Naive thymus-derived CD4-positive, alpha-beta T cell (primary cell): ENCODE measurements at regions of chr4 and their contacts with region 1.

Region 1: GRCh38 chr4:85968945-85969819 is 390.7 kb downstream of the MAPK10 start:
- DNase-seq: peak in 2 of 9 donors; percentile 1 to 7
- ATAC-seq: no peak
- H3K4me3 ChIP-seq: no peak overlapping the region
- H3K4me3 Mint-ChIP-seq: no peak overlapping the region
- H3K27ac ChIP-seq: no peak overlapping the region
- H3K27ac Mint-ChIP-seq: no peak overlapping the region
- H3K4me1 ChIP-seq: no peaks in the 10 kb centered on the region
- H3K4me1 Mint-ChIP-seq: no peaks in the 10 kb centered on the region
- H3K27me3 ChIP-seq: no peaks in the 10 kb centered on the region
- H3K27me3 Mint-ChIP-seq: no peaks in the 10 kb centered on the region

Region 2: GRCh38 chr4:85942107-85942506 is 27.1 kb before region 1 on chr4:
- CTCF ChIA-PET with region 1: no interaction called
- POLR2A ChIA-PET with region 1: no interaction called
- intact Hi-C with region 1: loop called in 1 of 2 experiments (anchors 1 kb)
- DNase-seq: no peak
- ATAC-seq: no peak
- H3K4me3 ChIP-seq: no peak overlapping the region
- H3K4me3 Mint-ChIP-seq: no peak overlapping the region
- H3K27ac ChIP-seq: no peak overlapping the region
- H3K27ac Mint-ChIP-seq: no peak overlapping the region
- H3K4me1 ChIP-seq: no peaks in the 10 kb centered on the region
- H3K4me1 Mint-ChIP-seq: no peaks in the 10 kb centered on the region
- H3K27me3 ChIP-seq: no peaks in the 10 kb centered on the region
- H3K27me3 Mint-ChIP-seq: no peaks in the 10 kb centered on the region

Region 3: GRCh38 chr4:85953651-85954018 is 15.5 kb before region 1 on chr4:
- CTCF ChIA-PET with region 1: no interaction called
- POLR2A ChIA-PET with region 1: no interaction called
- intact Hi-C with region 1: no loop called
- DNase-seq: no peak
- ATAC-seq: no peak
- H3K4me3 ChIP-seq: no peak overlapping the region
- H3K4me3 Mint-ChIP-seq: no peak overlapping the region
- H3K27ac ChIP-seq: no peak overlapping the region
- H3K27ac Mint-ChIP-seq: no peak overlapping the region
- H3K4me1 ChIP-seq: no peaks in the 10 kb centered on the region
- H3K4me1 Mint-ChIP-seq: peaks cover 0 to 1% (median 0%) of the 10 kb centered on the region in 7 donors
- H3K27me3 ChIP-seq: no peaks in the 10 kb centered on the region
- H3K27me3 Mint-ChIP-seq: peaks cover 0 to 3% (median 0%) of the 10 kb centered on the region in 5 donors